ENCODE measurements at regions of chr9 and their contacts with region 1.

Region 1: DNA sequence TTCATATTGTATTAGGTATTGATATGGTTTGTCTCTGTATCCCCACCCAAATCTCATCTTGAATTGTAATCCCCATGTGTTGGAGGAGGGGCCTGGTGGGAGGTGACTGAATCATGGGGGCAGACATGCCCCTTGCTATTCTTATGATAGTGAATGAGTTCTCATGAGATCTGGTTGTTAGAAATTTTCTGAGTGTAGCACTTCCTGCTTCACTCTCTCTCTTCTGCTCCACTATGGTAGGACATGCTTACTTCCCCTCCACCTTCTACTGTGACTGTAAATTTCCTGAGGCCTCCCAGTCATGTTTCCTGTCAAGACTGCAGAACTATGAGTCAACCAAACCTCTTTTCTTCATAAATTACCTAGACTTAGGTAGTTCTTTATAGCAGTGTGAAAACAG is 187.4 kb upstream of the SLC24A2 start:
- DNase-seq: peak; percentile 69
- H3K4me3 Mint-ChIP-seq: no peak overlapping the region
- H3K27ac Mint-ChIP-seq: peak overlapping the region; percentile 83
- H3K4me1 Mint-ChIP-seq: peaks cover 28% of the 10 kb centered on the region
- H3K27me3 Mint-ChIP-seq: no peaks in the 10 kb centered on the region

Region 2: DNA sequence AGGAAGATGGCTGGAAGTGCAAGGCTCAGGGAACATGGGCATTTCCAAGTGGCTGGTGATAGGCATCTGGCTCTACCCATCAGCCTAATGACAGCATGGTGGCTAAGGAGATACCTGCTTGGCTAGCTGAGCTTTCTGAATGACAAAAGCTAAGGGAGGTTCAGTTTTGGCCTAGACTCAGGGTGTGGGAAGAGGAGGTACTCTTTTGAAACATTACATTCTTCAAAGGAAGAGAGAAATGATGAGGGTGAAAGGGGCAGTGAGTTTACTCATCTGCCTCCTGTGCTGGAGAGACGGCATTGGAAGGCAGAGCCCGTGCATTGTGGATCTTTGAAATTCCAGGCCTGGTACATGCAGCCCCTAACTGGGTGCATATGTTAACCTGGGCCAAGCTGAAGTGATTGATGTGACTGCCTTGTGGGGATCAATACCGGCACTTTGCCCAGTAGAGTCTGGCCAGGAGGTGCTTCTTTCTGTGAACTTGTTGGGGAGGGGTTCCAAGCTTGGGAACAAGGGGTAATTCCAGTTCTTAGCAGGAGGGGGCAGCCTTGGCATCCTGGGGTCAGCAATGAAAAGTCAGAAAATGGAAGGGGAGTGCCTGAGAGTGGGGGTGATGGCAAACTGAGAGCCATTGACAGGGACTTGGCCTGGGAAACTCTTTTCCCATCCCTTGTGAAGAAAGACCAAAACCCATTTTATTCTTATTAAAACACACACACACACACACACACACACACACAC is 458.9 kb before region 1 on chr9:
- CTCF ChIA-PET with region 1: no interaction called
- intact Hi-C with region 1: loop called (anchors 1 kb)
- DNase-seq: peak; percentile 21
- H3K4me3 Mint-ChIP-seq: no peak overlapping the region
- H3K27ac Mint-ChIP-seq: peak overlapping the region; percentile 15
- H3K4me1 Mint-ChIP-seq: peaks cover 31% of the 10 kb centered on the region
- H3K27me3 Mint-ChIP-seq: peaks cover 11% of the 10 kb centered on the region

Region 3: GRCh38 chr9:19965336-19965735 is 10.9 kb before region 1 on chr9:
- CTCF ChIA-PET with region 1: no interaction called
- intact Hi-C with region 1: no loop called
- DNase-seq: no peak
- H3K4me3 Mint-ChIP-seq: no peak overlapping the region
- H3K27ac Mint-ChIP-seq: no peak overlapping the region
- H3K4me1 Mint-ChIP-seq: peaks cover 9% of the 10 kb centered on the region
- H3K27me3 Mint-ChIP-seq: peaks cover 2% of the 10 kb centered on the region

Region 4: DNA sequence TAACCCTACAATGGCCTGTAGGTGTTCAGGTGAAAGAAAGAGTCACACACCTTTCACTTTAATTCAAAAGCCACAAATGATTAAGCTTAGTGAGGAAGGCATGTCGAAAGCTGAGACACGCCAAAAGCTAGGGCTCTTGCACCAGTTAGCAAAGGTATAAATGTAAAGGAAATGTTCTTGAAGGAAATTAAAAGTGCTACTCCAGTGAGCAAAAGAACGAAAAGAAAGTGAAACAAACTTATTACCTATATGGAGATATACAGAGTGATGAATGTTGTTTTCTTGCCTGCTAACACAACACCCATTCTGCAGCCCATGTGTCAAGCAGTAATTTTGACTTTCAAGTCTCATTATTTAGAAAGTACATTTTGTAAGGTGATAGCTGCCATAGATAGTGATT is 66.8 kb after region 1 on chr9:
- CTCF ChIA-PET with region 1: no interaction called
- intact Hi-C with region 1: loop called (anchors 1 kb)
- DNase-seq: peak; percentile 43
- H3K4me3 Mint-ChIP-seq: peak overlapping the region; percentile 32
- H3K27ac Mint-ChIP-seq: no peak overlapping the region
- H3K4me1 Mint-ChIP-seq: peaks cover 20% of the 10 kb centered on the region
- H3K27me3 Mint-ChIP-seq: no peaks in the 10 kb centered on the region

Region 5: DNA sequence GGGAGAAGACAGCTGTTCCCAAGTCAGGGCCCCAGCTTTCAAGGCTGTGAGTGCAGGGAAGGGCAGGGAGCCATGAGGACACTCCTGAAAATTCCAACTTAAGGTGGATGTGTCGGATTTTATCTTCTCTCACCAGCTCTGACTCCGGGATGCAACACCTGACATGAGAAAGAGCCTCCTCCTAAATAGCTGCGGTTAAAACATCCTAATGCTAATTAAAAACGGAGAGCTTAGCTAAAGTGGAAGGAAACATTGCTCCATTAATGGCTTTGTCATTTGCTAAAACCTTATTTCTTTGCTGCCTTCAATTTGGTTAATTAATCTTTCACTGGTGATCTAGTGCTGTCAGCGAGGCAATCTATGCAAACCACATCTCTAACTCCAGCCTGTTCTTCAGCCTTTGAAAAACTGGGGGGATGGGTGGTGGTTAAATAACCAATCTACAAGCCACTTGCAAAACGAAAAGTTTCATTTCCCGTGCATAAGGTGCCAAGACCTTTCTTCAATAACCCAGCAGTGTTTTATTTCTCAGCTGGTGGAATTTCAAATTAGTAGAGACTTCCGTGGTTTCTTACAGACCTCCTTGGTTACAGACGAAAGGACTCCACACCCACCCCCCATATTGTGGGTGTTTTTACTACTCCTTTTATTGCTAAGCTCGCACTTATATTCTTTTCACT is 266.4 kb after region 1 on chr9:
- CTCF ChIA-PET with region 1: no interaction called
- intact Hi-C with region 1: loop called (anchors 2 kb)
- DNase-seq: peak; percentile 52
- H3K4me3 Mint-ChIP-seq: no peak overlapping the region
- H3K27ac Mint-ChIP-seq: no peak overlapping the region
- H3K4me1 Mint-ChIP-seq: peaks cover 60% of the 10 kb centered on the region
- H3K27me3 Mint-ChIP-seq: no peaks in the 10 kb centered on the region

Region 6: GRCh38 chr9:21362287-21362686 is 1386.1 kb after region 1 on chr9:
- CTCF ChIA-PET with region 1: no interaction called
- intact Hi-C with region 1: no loop called
- DNase-seq: no peak
- H3K4me3 Mint-ChIP-seq: no peak overlapping the region
- H3K27ac Mint-ChIP-seq: no peak overlapping the region
- H3K4me1 Mint-ChIP-seq: peaks cover 15% of the 10 kb centered on the region
- H3K27me3 Mint-ChIP-seq: peaks cover 9% of the 10 kb centered on the region